ENCODE measurements at regions of chr3 and their contacts with region 1.

Region 1: DNA sequence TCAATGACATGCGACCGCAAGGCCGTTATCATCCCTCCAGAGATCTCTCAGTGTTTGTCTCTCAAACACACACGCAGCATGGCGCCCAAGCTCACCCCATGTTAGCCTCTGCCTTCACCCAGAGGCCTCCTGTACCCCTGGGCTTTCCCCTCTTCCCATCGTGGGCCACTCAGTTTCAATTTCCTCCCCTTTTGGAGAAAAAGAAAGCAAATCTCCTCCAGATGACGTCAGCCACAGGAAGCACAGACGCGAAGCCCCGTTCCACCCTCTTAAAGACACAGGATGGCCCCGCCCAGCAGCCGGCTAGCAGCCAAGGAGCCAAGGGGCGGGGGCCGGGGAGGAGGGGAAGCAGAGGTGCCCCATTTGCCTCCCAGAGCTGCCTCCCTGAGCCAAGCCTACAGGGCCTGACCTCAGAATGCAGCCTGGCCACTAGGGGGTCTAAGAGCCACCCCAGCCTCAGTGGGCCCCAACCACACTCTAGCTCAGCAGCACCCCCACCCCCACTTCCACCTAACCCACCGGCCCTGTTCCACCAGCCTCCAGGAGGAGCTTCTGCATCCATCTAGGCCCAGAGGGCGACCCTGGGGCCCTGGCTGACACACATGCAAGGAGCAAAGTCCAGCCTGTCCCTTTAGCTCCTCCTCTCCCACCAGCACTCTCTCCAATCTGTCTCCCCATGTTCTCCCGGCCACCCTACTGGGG is 26.5 kb downstream of the ATRIP start:
- DNase-seq: peak; percentile 95
- CTCF ChIP-seq: peak; percentile 24

Region 2: DNA sequence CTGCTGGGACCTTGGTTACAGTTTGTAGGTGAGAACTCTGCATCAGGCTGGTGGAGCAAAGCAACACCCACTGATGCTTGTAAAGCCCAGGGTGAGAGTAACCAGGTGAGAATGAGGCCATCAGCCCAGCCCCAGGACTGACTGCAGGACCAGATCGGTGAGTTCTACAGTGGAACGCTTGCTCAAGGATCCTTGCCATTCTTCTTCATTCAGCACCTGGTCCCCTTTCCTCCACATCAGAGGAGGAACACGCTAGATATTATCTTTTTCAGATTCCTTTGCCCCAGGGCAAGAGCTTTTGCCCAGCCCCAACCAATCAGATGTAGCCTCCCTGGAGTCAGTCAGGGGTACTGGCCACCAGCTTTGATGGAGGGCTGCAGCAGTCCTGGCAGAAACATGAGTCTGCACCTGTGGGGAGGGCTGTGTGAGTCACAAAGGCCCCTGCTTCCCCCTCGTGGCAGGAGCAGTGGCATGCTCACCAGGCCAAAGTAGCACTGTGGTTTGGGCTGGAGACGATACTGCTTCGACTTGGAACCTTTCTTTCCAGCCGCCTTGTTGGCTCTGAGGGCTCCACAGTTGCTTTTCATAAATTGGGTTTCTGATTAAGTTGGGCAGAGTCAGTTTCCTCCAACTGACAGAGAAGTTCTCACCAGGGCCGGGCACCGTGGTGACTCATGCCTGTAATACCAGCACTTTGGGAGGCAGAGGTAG is 34.4 kb after region 1 on chr3:
- CTCF ChIA-PET with region 1: interaction called, 10 read pairs
- POLR2A ChIA-PET with region 1: no interaction called
- DNase-seq: peak; percentile 81
- CTCF ChIP-seq: peak; percentile 76